Dendritic cell treated with granulocyte-macrophage colony-stimulating factor and Interleukin-4, amounts not matched to agents 40 ng/mL and 50 ng/mL, for 4 days (primary cell): ENCODE measurements at regions of chr10 and their contacts with region 1.

Region 1: GRCh38 chr10:22758867-22759266 is 44.5 kb upstream of the PIP4K2A start:
- H3K4me3 Mint-ChIP-seq: no peak overlapping the region
- H3K27ac Mint-ChIP-seq: no peak overlapping the region
- H3K4me1 Mint-ChIP-seq: peaks cover 21% of the 10 kb centered on the region
- H3K27me3 Mint-ChIP-seq: peaks cover 6% of the 10 kb centered on the region

Region 2: DNA sequence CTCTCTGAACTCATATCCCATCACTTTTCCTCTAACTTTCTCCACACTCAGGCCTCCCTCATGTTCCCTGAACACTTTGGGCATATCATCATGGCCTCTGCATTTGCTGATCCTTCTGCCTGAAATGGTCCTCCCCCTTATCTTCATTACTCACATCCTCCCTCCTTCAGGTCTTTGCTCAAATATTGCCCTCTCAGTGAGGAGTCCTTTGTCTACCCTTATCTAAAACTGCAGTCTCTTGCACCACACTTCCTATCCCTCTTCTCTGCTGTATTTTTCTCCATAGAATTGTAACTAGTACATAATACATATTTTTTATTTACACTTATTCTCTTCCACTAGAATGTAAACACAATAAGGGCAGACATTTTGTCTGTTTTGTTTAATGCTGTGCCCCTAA is 797.0 kb before region 1 on chr10:
- intact Hi-C with region 1: no loop called
- H3K4me3 Mint-ChIP-seq: no peak overlapping the region
- H3K27ac Mint-ChIP-seq: no peak overlapping the region
- H3K4me1 Mint-ChIP-seq: peaks cover 9% of the 10 kb centered on the region
- H3K27me3 Mint-ChIP-seq: no peaks in the 10 kb centered on the region

Region 3: GRCh38 chr10:22723343-22723779 is 35.5 kb before region 1 on chr10:
- intact Hi-C with region 1: loop called (anchors 5 kb)
- H3K4me3 Mint-ChIP-seq: peak overlapping the region; percentile 47
- H3K27ac Mint-ChIP-seq: peak overlapping the region; percentile 55
- H3K4me1 Mint-ChIP-seq: peaks cover 47% of the 10 kb centered on the region
- H3K27me3 Mint-ChIP-seq: peaks cover 8% of the 10 kb centered on the region

Region 4: GRCh38 chr10:22816298-22816653 is 57.4 kb after region 1 on chr10:
- intact Hi-C with region 1: no loop called
- H3K4me3 Mint-ChIP-seq: no peak overlapping the region
- H3K27ac Mint-ChIP-seq: peak overlapping the region; percentile 46
- H3K4me1 Mint-ChIP-seq: peaks cover 18% of the 10 kb centered on the region
- H3K27me3 Mint-ChIP-seq: no peaks in the 10 kb centered on the region